Mucosa of descending colon (tissue), 3 donors: ENCODE measurements at regions of chr17 and their contacts with region 1.

Region 1: DNA sequence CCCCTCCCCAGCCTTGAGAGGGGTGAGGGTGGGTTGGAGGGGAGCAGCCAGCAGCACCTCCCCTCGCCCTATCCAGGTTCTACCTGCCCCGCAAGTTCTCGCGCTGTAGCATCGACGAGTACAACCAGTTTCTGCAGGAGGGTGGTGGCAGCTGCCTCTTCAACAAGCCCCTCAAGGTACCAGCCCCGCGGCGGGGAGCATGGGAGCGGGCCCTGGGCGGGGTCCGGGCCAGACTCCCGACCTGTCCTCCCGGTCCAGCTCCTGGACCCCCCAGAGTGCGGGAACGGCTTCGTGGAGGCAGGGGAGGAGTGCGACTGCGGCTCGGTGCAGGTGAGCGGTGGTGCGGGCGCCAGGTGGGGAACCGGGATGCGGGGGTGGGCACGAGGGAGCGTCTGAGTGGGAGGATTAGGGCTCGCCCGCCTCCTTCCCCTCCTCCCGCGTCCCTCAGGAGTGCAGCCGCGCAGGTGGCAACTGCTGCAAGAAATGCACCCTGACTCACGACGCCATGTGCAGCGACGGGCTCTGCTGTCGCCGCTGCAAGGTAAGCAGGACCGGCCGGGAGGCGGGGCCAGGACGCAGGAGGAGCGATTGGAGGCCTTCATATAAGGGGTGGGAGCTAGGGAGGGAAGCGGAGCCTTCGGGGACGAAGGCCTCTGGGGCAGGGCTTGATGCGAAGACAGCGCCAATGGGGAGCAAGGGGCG is 16.5 kb downstream of the ADAM11 start:
- DNase-seq: peak; percentile 98 to 99 (median 99)
- ATAC-seq: peak; percentile 95
- H3K4me3 ChIP-seq: no peak overlapping the region
- H3K4me1 ChIP-seq: peaks cover 22% of the 10 kb centered on the region
- CTCF ChIP-seq: peak; percentile 3

Region 2: DNA sequence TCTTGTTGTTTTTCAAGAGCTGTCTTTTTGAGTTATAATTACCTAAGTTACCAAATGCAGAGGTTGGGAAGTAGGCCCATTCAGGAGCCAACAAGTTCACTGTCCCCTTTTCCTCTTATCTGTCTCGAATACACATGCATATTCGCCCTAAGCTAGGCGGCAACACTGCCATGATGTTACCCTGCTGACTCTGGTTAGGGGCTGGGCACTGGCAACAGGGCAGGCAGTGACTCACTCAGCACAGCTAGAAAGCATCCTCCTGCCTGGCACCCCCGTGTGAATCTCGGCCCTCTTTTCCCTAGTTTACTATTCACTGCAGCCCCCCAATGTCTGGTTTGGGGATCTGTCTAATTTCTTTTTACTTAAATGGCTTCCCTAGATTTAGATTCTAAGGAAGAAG is 53.0 kb before region 1 on chr17:
- intact Hi-C with region 1: no loop called
- DNase-seq: no peak
- ATAC-seq: no peak
- H3K4me3 ChIP-seq: no peak overlapping the region
- H3K4me1 ChIP-seq: no peaks in the 10 kb centered on the region
- CTCF ChIP-seq: no peak

Region 3: DNA sequence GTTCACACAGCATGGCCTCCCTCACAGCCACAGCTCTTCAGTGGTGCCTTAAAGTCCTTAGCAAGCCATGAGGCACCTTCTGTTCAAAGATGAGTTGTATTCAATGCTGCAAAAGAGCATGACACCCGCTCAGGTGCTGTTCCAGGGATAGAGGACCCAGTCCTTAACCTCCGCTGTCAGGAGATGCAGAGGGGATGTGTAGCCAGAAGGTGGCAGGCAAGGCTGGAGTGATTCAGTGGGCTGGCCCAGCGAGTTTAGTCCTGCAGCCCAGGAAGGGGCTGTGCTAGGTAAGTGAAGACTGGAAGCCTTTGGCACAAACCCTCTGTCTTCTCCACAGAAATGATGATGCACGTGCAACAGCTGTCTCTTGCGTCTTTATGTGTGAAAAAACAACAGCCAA is 41.5 kb before region 1 on chr17:
- intact Hi-C with region 1: no loop called
- DNase-seq: no peak
- ATAC-seq: no peak
- H3K4me3 ChIP-seq: no peak overlapping the region
- H3K4me1 ChIP-seq: no peaks in the 10 kb centered on the region
- CTCF ChIP-seq: no peak

Region 4: DNA sequence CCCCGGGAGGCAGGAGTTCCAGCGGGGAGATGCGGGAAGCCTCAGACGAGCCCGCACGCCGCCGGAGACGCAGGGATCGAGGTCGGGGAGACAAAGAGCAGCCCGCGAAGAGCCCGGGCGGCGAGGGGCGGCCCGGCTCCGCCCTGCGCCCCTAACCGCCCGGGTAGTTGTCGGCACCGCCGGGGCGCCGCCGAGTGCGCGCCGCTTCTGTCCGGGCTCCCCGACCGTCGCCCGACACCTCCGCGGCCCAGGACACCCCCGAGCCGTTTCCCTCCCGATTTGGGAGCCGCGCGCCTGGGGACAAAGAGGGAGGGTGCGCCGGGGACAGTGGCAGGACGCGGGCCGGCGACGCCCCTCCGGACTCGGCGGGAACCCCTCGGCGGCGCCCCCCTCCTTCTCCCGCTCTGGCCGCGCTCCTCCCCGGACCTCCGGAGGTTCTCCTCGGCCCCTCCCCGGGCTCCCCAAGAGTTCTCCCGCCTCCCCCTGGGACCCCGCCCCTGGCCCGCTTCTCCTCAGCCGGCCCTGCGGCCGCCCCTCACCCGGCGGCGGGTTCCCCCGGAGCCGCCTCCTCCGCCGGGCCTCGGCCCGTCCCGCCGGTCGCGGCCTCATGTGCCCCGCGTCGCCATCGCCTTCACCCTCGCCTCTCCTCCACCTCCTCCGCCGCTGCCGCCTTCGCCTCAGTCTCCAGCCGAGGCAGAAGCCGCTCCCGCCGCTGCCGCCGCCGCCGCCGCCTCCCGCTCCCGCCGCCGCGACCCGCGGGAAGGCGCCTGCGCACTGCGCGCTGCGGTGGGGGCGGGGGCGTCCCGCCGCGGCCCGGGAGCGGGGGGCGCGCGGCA is 54.5 kb after region 1 on chr17 and contains the start of gene GJC1:
- intact Hi-C with region 1: loop called in 1 of 2 experiments (anchors 5 kb)
- DNase-seq: no peak
- ATAC-seq: peak; percentile 22
- H3K4me3 ChIP-seq: no peak within 1 kb of the TSS
- H3K4me1 ChIP-seq: peaks cover 12% of the 10 kb centered on the region
- CTCF ChIP-seq: no peak
- total RNA-seq, gene GJC1: 2.2 to 140 (median 5.7) TPM

Region 5: DNA sequence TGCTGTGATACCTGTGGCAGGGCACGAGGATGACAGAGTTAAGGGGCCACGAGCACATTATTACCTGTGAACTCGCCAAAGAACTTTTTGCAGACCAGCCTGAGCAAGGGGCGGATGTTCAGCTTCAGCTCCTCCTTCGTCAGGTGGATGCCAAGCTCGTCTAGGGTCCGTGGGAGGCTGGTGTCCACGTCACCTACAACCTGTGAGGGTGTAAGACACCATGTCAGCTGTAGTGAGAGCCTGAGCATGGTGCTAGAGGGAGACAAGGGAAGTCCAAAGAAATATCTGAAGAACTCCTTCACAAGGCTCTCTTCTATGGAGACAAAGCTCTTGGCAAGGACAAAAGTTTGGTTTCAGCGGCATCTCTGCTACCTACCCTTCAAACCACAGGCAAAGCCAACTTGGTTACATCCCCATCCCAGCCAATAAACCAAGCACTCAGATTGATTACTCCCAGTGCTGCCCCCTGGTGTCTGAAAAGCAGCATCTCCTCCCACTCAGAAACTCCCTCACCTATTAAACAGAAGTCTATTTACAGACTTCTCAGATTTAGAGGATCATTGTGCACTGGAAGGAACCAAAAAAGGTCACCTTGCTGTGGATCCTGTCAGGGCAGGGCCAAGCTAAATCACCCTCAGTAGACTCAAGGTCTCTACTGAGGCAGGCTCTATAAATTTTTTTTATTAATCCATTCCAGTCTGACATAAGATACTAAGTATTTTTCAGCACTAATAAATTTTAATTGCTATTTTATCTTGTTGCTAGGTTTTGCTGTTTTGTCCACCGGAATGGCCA is 89.8 kb after region 1 on chr17:
- intact Hi-C with region 1: loop called (anchors 2 to 5 kb)
- DNase-seq: peak in 2 of 3 donors; percentile 37 to 80
- ATAC-seq: peak; percentile 84
- H3K4me3 ChIP-seq: no peak overlapping the region
- H3K4me1 ChIP-seq: no peaks in the 10 kb centered on the region
- CTCF ChIP-seq: peak; percentile 67

Region 6: DNA sequence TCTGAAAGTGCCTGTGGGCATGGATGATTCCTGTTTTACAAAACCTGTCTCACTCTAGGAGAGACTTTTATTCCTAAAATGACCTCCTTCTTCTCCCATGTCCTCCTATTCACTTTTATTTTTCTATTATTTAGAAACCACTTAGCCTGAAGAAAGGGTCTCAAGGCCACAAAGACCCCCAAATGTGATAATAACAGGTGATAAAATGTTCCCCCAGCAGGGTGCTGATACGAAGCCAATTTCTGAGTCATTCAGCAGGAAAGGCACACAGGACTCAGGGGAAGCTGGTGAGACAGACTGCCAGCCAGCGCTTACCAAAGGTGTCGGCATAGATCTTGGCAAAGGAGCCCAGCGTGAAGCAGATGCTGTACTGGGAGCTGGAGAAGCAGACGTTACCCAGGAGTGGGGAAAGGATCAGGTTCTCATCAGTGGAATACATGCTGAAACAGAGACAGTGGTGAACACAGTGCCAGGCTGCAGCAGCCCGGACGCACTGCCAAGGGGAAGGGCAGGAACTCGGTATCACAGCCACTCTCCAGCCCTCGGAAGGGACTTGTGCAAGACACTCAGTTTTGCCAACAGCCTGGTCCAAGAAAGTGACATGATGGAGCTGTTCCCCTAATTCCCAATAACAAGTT is 97.0 kb after region 1 on chr17:
- intact Hi-C with region 1: loop called in 1 of 2 experiments (anchors 5 kb)
- DNase-seq: no peak
- ATAC-seq: no peak
- H3K4me3 ChIP-seq: no peak overlapping the region
- H3K4me1 ChIP-seq: no peaks in the 10 kb centered on the region
- CTCF ChIP-seq: no peak

Region 7: DNA sequence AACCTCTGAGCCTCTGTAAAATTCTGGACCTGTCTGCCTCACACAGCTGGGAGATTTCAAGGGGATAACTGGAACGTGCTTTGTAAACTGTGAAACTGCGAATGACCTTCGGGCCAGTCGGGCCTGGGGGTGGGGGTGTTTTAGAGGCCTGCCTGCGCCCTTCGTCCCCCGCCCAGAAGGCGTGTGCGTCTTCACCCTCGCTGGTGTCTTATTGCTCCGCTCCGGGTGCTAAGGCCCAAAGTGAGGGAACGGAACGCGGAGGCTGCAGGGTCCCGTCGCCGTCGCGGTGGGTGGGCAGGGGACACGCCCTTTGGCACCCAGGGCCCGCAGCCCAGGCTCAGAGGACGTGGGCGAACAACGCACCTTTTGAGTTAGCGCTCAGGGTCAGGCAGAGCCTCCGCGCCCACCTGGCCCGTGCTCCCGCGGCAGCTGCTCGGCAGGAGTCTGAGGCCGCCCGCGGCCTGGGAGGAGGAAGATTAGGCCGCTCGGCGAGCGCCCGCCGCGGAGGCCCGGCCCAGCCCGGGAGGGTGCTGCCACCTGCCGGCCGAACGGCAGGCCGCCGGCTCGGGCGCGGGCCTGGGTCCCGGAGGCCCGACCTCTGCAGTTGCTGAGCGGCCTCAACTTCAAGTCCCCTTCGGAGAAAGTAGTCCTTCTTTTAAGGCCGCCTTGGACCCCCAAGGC is 246.5 kb after region 1 on chr17:
- intact Hi-C with region 1: loop called in 1 of 2 experiments (anchors 10 kb)
- DNase-seq: peak; percentile 62 to 82 (median 73)
- ATAC-seq: peak; percentile 89
- H3K4me3 ChIP-seq: no peak overlapping the region
- H3K4me1 ChIP-seq: peaks cover 18% of the 10 kb centered on the region
- CTCF ChIP-seq: peak; percentile 98

Region 8: GRCh38 chr17:45038728-45039634 is 263.7 kb after region 1 on chr17:
- intact Hi-C with region 1: loop called in 1 of 2 experiments (anchors 10 kb)
- DNase-seq: peak in 2 of 3 donors; percentile 39 to 54
- ATAC-seq: peak; percentile 47
- H3K4me3 ChIP-seq: no peak overlapping the region
- H3K4me1 ChIP-seq: peaks cover 28% of the 10 kb centered on the region
- CTCF ChIP-seq: no peak